ENCODE measurements at regions of chr17 and their contacts with region 1.

Region 1: DNA sequence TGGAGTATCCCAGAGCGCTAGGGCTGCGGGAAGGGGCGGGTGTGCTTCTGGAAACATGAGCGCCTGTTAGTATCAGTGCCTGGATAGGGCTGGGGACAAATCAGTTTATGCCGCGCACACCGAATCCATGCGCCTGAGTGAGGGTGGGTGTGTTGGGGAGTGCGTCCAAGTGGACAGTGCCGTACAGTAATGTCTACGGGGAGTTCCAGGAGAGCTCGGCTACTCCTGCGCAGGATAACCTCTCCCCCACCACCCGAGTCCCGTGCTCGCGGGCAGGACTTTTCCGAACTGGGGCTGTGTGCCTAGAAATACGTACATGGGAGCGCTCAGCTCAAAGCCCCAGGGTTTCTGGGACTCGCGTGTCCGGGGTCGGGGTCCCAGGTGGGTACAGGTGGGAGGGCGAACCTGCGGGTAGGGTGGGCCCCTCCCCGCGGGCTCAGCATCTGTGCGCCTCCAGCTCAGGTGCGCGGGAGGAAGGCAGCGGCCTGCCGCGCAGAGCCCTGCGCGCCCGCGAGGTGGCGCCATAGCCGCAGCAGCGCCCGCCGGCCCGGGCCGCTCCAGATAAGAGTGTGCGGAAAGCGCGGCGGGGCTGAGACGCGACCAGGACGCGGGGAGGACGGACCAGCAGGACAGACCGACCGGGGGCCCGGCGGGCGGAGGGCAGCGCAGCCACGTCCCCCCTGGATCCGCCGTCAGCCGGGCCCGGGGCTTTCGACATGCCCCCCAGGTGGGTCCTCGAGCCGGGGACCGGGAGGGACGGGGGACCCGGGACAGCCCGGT is at the start of gene HIC1:
- DNase-seq: peak; percentile 87
- H3K4me3 Mint-ChIP-seq: peak within 1 kb of the TSS; percentile 68
- H3K27ac Mint-ChIP-seq: peak within 1 kb of the TSS; percentile 33
- H3K4me1 Mint-ChIP-seq: peaks cover 16% of the 10 kb centered on the region
- H3K27me3 Mint-ChIP-seq: peaks cover 12% of the 10 kb centered on the region
- total RNA-seq, gene HIC1: 13.1 to 13.2 TPM

Region 2: GRCh38 chr17:2029911-2030778 is 24.6 kb before region 1 on chr17 and contains the start of gene DPH1:
- CTCF ChIA-PET with region 1: interaction called, 11 read pairs
- POLR2A ChIA-PET with region 1: no interaction called
- intact Hi-C with region 1: no loop called
- DNase-seq: peak; percentile 92
- H3K4me3 Mint-ChIP-seq: peak within 1 kb of the TSS; percentile 95
- H3K27ac Mint-ChIP-seq: peak within 1 kb of the TSS; percentile 67
- H3K4me1 Mint-ChIP-seq: peaks cover 15% of the 10 kb centered on the region
- H3K27me3 Mint-ChIP-seq: peaks cover 22% of the 10 kb centered on the region
- total RNA-seq, gene DPH1: 29.4 to 31.1 TPM

Region 3: DNA sequence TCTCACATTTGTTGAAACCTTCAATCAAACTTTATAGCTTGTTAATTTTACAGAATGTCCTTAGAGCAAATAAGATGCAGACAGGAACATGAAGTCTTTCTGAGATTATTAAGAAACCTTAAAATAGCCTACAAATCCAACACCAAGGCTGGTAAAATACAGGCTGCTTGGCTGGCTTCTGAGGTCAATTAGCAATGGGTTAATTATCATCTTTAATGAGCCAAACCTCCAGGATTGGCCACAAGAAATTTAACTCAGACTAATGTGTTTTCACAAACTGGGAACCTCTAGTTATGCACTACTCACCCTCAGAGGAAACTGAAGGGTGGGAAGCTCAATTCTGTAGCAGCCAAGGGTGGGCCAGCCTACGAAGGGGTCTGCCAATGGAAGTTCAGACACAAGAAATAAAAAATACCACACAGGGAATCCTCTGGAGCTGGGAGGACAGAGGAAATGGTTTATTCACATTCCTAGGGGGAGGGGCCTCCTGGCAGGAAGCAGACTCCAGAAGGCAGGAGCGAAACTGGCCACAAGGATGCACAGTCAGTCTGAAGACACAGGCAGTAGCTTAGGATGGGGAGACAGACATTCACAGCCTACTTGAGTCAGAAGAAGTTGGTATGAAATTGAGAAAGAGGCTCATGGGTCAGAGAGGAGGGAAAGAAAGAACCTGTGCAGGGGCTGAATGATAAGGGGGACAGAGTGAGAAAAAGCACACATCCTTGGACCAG is 36.3 kb after region 1 on chr17:
- CTCF ChIA-PET with region 1: interaction called, 90 read pairs
- POLR2A ChIA-PET with region 1: interaction called, 14 read pairs
- intact Hi-C with region 1: loop called (anchors 5 kb)
- DNase-seq: no peak
- H3K4me3 Mint-ChIP-seq: peak overlapping the region; percentile 83
- H3K27ac Mint-ChIP-seq: peak overlapping the region; percentile 9
- H3K4me1 Mint-ChIP-seq: peaks cover 59% of the 10 kb centered on the region
- H3K27me3 Mint-ChIP-seq: no peaks in the 10 kb centered on the region

Region 4: GRCh38 chr17:2259769-2260536 is 205.3 kb after region 1 on chr17:
- CTCF ChIA-PET with region 1: interaction called, 22 read pairs
- POLR2A ChIA-PET with region 1: interaction called, 9 read pairs
- intact Hi-C with region 1: no loop called
- DNase-seq: peak; percentile 90
- H3K4me3 Mint-ChIP-seq: peak overlapping the region; percentile 65
- H3K27ac Mint-ChIP-seq: peak overlapping the region; percentile 93
- H3K4me1 Mint-ChIP-seq: peaks cover 72% of the 10 kb centered on the region
- H3K27me3 Mint-ChIP-seq: no peaks in the 10 kb centered on the region

Region 5: GRCh38 chr17:2282297-2282873 is 227.7 kb after region 1 on chr17:
- CTCF ChIA-PET with region 1: interaction called, 96 read pairs
- POLR2A ChIA-PET with region 1: interaction called, 4 read pairs
- intact Hi-C with region 1: loop called (anchors 1 kb)
- DNase-seq: no peak
- H3K4me3 Mint-ChIP-seq: no peak overlapping the region
- H3K27ac Mint-ChIP-seq: peak overlapping the region; percentile 33
- H3K4me1 Mint-ChIP-seq: peaks cover 12% of the 10 kb centered on the region
- H3K27me3 Mint-ChIP-seq: no peaks in the 10 kb centered on the region

Region 6: GRCh38 chr17:2336215-2336851 is 281.6 kb after region 1 on chr17 and contains the start of gene TSR1:
- CTCF ChIA-PET with region 1: interaction called, 17 read pairs
- POLR2A ChIA-PET with region 1: interaction called, 5 read pairs
- intact Hi-C with region 1: loop called (anchors 5 kb)
- DNase-seq: peak; percentile 94
- H3K4me3 Mint-ChIP-seq: peak within 1 kb of the TSS; percentile 100
- H3K27ac Mint-ChIP-seq: peak within 1 kb of the TSS; percentile 90
- H3K4me1 Mint-ChIP-seq: peaks cover 14% of the 10 kb centered on the region
- H3K27me3 Mint-ChIP-seq: no peaks in the 10 kb centered on the region
- total RNA-seq, gene TSR1: 55.1 to 55.9 TPM

Region 7: DNA sequence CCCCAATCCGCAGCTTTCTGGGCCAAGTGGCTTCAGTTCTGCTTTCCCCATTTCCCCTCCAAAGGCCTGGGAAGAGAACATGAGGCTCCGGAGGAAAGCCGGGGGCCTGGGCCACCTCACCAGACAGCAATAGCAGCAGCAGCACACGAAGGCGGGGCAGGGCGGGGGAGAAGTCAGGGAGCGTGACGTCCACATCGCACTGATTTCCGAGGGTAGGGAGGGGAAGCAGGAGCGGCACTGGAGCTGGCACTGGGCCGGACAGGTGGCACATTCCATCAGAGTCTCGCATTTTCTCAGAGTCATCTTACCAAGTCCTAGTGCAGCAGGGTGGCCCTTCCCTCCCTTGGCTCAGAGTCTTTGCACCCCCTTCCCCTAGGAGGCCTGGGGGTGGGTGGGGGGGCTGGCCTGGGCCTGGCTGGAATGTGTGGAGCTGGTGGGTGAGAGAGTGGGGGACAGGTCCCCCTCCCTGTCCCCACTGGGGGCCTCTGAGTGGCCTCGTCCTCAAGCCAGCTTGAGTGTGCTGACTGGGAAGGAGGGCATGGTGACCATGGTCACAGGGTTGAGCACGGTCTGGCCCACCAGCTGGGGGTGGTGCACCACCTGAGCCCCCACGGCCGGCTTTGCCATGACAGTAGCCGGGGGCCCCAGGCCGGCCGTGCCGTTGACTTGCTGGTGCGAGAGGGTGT is 331.8 kb after region 1 on chr17:
- CTCF ChIA-PET with region 1: interaction called, 10 read pairs
- POLR2A ChIA-PET with region 1: no interaction called
- intact Hi-C with region 1: no loop called
- DNase-seq: no peak
- H3K4me3 Mint-ChIP-seq: no peak overlapping the region
- H3K27ac Mint-ChIP-seq: no peak overlapping the region
- H3K4me1 Mint-ChIP-seq: peaks cover 24% of the 10 kb centered on the region
- H3K27me3 Mint-ChIP-seq: no peaks in the 10 kb centered on the region